Right ventricle myocardium inferior (tissue), 1 donor: ENCODE measurements at regions of chr5 and their contacts with region 1.

Region 1: GRCh38 chr5:100903039-100903887 is at the start of gene ST8SIA4:
- DNase-seq: peak; percentile 94
- ATAC-seq: peak; percentile 85
- total RNA-seq, gene ST8SIA4: 3.4 TPM

Region 2: GRCh38 chr5:100787648-100788047 is 115.6 kb before region 1 on chr5:
- intact Hi-C with region 1: loop called (anchors 5 kb)
- DNase-seq: no peak
- ATAC-seq: no peak

Region 3: GRCh38 chr5:100840384-100840783 is 62.9 kb before region 1 on chr5:
- intact Hi-C with region 1: loop called (anchors 5 kb)
- DNase-seq: no peak
- ATAC-seq: no peak

Region 4: DNA sequence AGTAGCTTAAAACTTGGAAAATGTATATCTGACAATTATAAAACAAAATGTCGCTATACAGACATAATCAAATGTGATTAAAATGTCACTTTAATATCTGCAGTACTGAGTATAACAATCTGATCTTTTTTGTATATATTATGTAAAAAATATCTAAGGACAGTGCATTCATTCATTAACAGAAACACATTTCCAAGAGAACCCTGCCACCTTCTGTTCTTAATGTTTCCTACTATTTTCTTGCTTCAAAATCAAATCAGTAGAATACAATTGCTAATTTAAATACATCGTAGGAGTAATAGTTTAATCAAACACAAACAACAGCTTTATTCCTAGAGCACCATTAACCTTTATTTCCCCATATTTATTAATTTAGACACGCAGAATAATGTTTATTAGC is 142.4 kb after region 1 on chr5:
- intact Hi-C with region 1: loop called (anchors 10 kb)
- DNase-seq: no peak
- ATAC-seq: no peak